ENCODE measurements at regions of chr17 and their contacts with region 1.

Region 1: GRCh38 chr17:50094753-50095619 is at the start of gene PDK2:
- DNase-seq: peak; percentile 100
- H3K4me3 ChIP-seq: peak within 1 kb of the TSS; percentile 75 to 84
- H3K27ac ChIP-seq: peak within 1 kb of the TSS; percentile 64 to 83
- H3K4me1 ChIP-seq: peaks cover 3 to 18% of the 10 kb centered on the region in 2 experiments; a peak in 1 of 4 replicates
- H3K27me3 ChIP-seq: no peaks in the 10 kb centered on the region
- CTCF ChIP-seq: no peak
- EP300 ChIP-seq: peak in 1 of 2 experiments; percentile 5; a peak in 1 of 4 replicates
- RAD21 ChIP-seq: no peak
- polyA plus RNA-seq, gene PDK2: 96.1 and 124 TPM in 2 replicates

Region 2: DNA sequence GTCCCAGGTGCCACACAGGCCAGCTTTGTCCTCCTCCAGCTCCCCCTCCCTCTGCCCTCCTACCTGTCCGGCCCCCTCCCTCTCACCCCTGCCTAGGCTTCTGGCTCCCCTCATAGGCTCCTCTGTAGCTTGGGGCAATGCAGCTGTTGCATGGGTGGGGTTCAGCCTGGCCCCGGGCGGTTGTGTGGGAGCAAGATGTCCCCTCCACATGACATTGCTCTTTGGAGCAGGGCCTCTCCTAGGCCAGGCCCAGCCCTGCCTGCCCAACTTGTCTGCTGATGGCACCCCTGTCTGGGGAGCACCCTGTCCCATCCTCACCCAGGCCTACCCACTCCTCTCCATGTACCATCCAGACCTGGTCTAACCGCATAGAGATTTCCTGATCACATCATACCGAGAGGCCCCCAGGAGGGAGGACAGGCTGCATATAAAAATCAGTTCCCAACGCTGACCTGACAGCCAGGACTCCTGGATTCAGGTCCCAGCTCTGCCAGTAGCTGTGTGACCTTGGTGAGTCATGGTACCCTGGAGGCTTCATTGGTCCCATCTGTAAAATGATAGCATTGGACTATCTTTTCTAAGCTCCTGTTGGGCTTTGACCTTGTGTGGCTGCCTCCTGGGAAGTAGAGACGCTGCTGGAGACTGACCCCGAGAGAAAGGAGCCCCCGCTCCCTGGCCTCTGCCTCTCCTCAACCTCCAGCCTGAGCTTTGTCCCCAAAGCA is 174.8 kb before region 1 on chr17:
- CTCF ChIA-PET with region 1: no interaction called
- POLR2A ChIA-PET with region 1: no interaction called
- DNase-seq: no peak
- H3K4me3 ChIP-seq: no peak overlapping the region
- H3K27ac ChIP-seq: no peak overlapping the region
- H3K4me1 ChIP-seq: no peaks in the 10 kb centered on the region
- H3K27me3 ChIP-seq: peaks cover 82% of the 10 kb centered on the region
- CTCF ChIP-seq: no peak
- EP300 ChIP-seq: no peak
- RAD21 ChIP-seq: no peak

Region 3: GRCh38 chr17:50026901-50027630 is 67.9 kb before region 1 on chr17:
- CTCF ChIA-PET with region 1: interaction called, 221 read pairs
- POLR2A ChIA-PET with region 1: no interaction called
- DNase-seq: peak; percentile 93
- H3K4me3 ChIP-seq: peak overlapping the region; percentile 46 to 71
- H3K27ac ChIP-seq: peak overlapping the region; percentile 74 to 99; a peak in 3 of 4 replicates
- H3K4me1 ChIP-seq: peaks cover 16 to 21% of the 10 kb centered on the region in 2 experiments; a peak in 3 of 4 replicates
- H3K27me3 ChIP-seq: no peaks in the 10 kb centered on the region
- CTCF ChIP-seq: peak; percentile 100
- EP300 ChIP-seq: no peak; a peak in 1 of 4 replicates
- RAD21 ChIP-seq: peak; percentile 95

Region 4: DNA sequence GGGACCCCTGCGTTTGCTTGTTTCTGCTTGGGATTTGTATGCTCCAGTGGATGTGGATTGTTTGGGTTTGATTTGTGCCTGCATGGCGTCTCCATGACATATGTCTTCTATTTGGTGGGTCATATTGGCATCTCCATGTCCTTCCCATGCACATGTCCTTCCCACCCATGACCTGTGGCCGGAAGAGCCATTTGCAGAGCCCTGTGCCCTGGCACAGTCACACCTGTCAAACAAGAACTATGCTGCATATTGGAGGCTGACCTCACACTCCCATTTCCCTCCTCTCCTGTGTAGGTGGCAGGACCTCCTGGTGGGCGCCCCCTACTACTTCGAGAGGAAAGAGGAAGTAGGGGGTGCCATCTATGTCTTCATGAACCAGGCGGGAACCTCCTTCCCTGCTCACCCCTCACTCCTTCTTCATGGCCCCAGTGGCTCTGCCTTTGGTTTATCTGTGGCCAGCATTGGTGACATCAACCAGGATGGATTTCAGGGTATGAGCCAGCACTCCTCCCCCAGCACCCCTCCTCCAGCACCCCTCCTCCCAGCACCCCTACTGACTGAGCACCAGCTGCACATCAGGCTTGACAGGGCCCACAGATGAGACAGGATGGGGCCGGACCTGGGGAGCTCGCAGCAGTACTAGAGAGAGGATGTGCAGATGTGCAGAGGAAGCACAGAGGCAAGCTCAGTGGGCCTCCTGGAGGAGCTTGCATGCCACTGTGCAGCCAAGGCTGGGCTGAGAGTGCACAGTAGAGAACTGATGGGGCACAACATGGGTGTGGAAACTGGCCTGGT is 23.1 kb before region 1 on chr17:
- CTCF ChIA-PET with region 1: interaction called, 19 read pairs
- POLR2A ChIA-PET with region 1: interaction called, 5 read pairs
- DNase-seq: no peak
- H3K4me3 ChIP-seq: no peak overlapping the region
- H3K27ac ChIP-seq: peak overlapping the region in 1 of 2 experiments; percentile 53; a peak in 1 of 4 replicates
- H3K4me1 ChIP-seq: peaks cover 0 to 2% of the 10 kb centered on the region in 2 experiments; a peak in 2 of 4 replicates
- H3K27me3 ChIP-seq: no peaks in the 10 kb centered on the region
- CTCF ChIP-seq: no peak
- EP300 ChIP-seq: no peak
- RAD21 ChIP-seq: no peak

Region 5: DNA sequence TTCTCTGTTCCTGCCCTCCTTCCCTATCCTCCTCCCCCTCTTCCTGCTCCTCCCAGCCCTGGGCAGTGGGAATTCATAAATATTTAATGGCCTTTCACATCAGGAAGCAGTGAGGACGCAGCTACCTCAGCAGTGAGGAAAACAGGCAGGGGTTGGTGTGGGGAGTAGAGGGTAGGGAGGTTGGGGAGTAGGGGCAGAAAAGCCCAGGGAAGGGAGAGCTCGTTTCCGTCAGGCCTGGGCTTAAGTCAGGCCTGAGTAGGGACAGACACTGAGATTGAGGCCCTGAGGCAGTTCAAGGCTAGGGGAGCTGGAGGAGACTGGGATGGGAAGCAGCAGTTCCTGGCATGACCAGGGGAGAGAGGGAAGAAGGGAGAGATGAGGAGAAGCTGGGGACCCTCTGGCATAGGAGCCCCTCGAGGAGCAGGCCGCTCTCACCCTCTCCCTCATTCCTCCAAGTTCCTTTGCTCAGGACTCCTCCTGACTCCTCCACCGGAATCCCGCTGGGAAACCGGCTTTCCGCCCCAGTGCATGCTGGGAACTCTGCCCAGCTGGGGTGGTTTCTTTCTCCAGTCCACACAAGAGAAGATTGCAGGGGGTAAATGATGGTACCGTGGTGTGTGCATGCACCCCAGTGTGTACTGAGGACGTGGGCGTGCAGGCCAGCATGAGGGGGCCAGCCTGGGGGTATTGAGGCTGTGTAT is 28.8 kb after region 1 on chr17:
- CTCF ChIA-PET with region 1: interaction called, 297 read pairs
- POLR2A ChIA-PET with region 1: no interaction called
- DNase-seq: peak; percentile 61
- H3K4me3 ChIP-seq: no peak overlapping the region
- H3K27ac ChIP-seq: no peak overlapping the region
- H3K4me1 ChIP-seq: peaks cover 0 to 7% of the 10 kb centered on the region in 2 experiments; a peak in 1 of 4 replicates
- H3K27me3 ChIP-seq: no peaks in the 10 kb centered on the region
- CTCF ChIP-seq: no peak
- EP300 ChIP-seq: no peak
- RAD21 ChIP-seq: no peak

Region 6: GRCh38 chr17:50151041-50151936 is 56.3 kb after region 1 on chr17:
- CTCF ChIA-PET with region 1: interaction called, 27 read pairs
- POLR2A ChIA-PET with region 1: interaction called, 16 read pairs
- DNase-seq: peak; percentile 99
- H3K4me3 ChIP-seq: peak overlapping the region; percentile 66 to 81
- H3K27ac ChIP-seq: peak overlapping the region; percentile 74 to 98
- H3K4me1 ChIP-seq: peaks cover 39 to 60% of the 10 kb centered on the region in 2 experiments; a peak in 3 of 4 replicates
- H3K27me3 ChIP-seq: no peaks in the 10 kb centered on the region
- CTCF ChIP-seq: peak; percentile 63
- EP300 ChIP-seq: peak in 1 of 2 experiments; percentile 34; a peak in 1 of 4 replicates
- RAD21 ChIP-seq: peak; percentile 19; the same call in 1 of the 2 replicates

Region 7: DNA sequence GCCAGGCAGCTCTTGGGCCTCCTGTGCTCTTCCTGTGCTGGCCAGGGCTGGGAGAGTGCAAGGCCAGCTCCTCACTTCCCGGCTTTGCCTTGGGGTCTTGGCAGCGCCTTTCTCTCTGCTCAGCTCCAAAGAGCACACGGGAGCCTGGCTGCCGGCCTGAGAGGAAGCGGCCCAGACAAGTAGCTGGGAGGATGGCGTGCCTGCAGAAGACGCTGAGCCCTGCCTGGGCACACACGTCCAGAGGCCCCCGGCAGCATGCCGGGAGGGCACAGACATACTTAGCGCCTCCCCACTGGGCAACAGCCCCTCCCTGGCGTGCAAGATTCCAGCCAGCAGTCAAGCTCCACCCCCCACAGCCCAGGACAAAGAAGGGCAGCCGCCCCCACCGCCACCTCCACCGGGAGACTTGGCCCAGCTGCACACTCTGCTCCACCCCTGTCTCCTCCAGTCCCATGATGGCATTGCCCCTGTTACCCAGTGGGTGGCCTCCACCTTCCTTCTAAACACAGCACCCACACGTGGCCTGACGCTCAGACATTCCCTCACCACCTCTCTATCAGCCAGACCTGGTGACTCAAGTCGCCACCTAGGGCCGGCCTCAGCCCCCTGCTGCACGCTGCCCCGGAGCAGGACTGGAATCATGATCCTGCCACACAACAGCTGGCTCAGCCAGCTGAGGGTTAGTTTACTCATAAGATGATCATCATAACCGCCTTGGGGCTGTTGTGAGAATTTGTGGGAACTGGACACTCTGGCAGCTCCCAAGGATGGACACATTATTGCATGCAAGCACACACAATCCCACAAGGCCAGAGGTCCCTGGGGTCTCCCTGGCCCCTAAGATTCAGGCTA is 83.2 kb after region 1 on chr17:
- CTCF ChIA-PET with region 1: interaction called, 11 read pairs
- POLR2A ChIA-PET with region 1: interaction called, 3 read pairs
- DNase-seq: peak; percentile 93
- H3K4me3 ChIP-seq: peak overlapping the region in 1 of 2 experiments; percentile 15; a peak in 1 of 4 replicates
- H3K27ac ChIP-seq: peak overlapping the region; percentile 94 to 100
- H3K4me1 ChIP-seq: peaks cover 29 to 52% of the 10 kb centered on the region in 2 experiments; a peak in 3 of 4 replicates
- H3K27me3 ChIP-seq: no peaks in the 10 kb centered on the region
- CTCF ChIP-seq: peak; percentile 77
- EP300 ChIP-seq: peak; percentile 27 to 36; a peak in 2 of 4 replicates
- RAD21 ChIP-seq: peak; percentile 53